Activated T-helper 2 cell treated with anti-CD3 and anti-CD28 coated beads, Interferon-gamma antibody, Interleukin-2, Interleukin-4, amounts not matched to agents 10 μg/mL and 5 μg/mL and 100 μg/mL, durations not matched to agents 14 hours and 24 hours and 36 hours (primary cell): ENCODE measurements at regions of chr5 and their contacts with region 1.

Region 1: DNA sequence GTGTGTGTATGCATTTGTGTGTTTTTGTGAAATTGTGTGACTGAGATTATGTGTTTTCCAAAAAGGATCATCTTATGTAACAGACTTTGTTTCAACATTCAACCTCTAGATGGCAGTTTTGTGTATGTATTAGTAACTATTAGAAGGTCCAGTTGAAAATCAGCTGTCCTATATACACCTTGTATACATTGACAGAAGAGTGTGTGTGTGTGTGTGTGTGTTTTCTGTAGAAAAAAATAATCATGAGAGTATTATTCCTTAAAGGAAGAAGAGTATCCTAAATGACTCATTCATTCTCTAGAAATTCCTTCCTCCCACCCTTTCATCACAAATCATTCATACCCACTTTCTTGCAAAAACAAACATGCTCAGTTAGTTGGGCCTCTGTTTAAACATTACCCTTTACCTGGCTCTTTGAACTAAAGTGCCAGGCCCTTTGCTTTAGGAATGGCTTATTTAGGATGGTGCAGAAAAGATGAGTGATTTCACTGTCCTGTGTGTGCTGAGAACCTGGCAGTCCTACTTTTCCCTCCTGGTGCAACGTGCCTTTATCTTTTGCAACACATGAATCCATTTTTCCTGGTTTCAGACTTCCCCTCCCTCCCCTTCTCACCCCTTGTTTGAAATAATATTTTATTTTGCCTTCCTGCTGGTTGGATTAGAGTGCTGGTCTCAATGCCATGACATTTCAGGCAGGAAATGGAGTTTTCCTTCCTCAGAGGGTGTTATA is 152.2 kb downstream of the ARHGAP26 start:
- DNase-seq: no peak
- H3K4me3 Mint-ChIP-seq: no peak overlapping the region
- H3K27ac Mint-ChIP-seq: no peak overlapping the region
- H3K4me1 Mint-ChIP-seq: peaks cover 33% of the 10 kb centered on the region
- H3K27me3 Mint-ChIP-seq: no peaks in the 10 kb centered on the region

Region 2: GRCh38 chr5:142977363-142978051 is 55.1 kb after region 1 on chr5:
- intact Hi-C with region 1: loop called (anchors 5 kb)
- DNase-seq: peak; percentile 37
- H3K4me3 Mint-ChIP-seq: peak overlapping the region; percentile 26
- H3K27ac Mint-ChIP-seq: peak overlapping the region; percentile 84
- H3K4me1 Mint-ChIP-seq: peaks cover 53% of the 10 kb centered on the region
- H3K27me3 Mint-ChIP-seq: no peaks in the 10 kb centered on the region

Region 3: DNA sequence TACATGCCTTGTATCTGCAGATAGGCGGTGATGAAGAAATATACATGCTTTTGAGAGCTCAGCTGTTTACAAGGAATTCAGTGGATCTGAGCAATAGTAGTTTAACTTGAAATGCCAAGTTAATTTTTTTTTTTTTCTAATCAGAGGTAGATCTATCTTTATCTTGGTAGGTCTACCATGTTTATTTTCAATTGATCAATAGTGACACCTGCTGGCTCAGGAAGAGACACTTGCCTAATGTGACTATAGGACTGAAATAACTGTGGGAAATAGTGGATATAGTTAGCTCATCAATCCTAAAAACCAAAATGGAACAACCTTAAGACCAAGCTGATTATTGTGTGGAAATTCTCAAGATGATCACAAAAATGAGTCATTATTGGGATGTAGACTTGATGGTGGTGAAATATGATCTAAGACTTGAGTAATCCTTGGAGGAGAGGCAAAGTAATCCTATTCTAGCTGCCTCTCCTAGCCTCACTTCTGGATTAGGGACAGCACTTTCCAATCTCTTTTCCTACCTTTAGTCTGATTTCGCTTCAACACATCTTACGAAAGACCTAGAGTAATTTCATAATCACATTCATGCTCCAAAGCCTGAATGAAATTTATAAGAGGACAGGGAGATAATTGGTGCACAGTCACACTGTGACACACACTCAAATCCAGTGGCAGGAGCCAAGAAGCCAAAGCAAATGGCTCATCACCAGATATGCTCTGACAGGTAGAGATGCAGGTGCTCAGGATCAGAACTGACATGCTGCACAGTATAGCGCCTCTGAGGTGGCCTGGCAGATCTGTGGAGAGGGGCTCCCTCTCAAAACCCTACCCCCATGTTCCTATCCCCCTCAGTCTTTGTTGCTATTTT is 1045.9 kb after region 1 on chr5:
- intact Hi-C with region 1: loop called (anchors 5 kb)
- DNase-seq: no peak
- H3K4me3 Mint-ChIP-seq: no peak overlapping the region
- H3K27ac Mint-ChIP-seq: no peak overlapping the region
- H3K4me1 Mint-ChIP-seq: peaks cover 2% of the 10 kb centered on the region
- H3K27me3 Mint-ChIP-seq: peaks cover 30% of the 10 kb centered on the region